Transverse colon (tissue), 4 donors: ENCODE measurements at regions of chr17 and their contacts with region 1.

Region 1: GRCh38 chr17:65455972-65456343 is 105.5 kb downstream of the AXIN2 start:
- DNase-seq: peak; percentile 35
- H3K4me3 ChIP-seq: no peak overlapping the region
- H3K27ac ChIP-seq: no peak overlapping the region
- H3K4me1 ChIP-seq: peaks cover 6 to 22% (median 8%) of the 10 kb centered on the region in 4 donors
- H3K27me3 ChIP-seq: no peaks in the 10 kb centered on the region
- CTCF ChIP-seq: peak in 4 of 5 experiments; percentile 23 to 27 (median 25)
- EP300 ChIP-seq: no peak
- POLR2A ChIP-seq: no peak

Region 2: DNA sequence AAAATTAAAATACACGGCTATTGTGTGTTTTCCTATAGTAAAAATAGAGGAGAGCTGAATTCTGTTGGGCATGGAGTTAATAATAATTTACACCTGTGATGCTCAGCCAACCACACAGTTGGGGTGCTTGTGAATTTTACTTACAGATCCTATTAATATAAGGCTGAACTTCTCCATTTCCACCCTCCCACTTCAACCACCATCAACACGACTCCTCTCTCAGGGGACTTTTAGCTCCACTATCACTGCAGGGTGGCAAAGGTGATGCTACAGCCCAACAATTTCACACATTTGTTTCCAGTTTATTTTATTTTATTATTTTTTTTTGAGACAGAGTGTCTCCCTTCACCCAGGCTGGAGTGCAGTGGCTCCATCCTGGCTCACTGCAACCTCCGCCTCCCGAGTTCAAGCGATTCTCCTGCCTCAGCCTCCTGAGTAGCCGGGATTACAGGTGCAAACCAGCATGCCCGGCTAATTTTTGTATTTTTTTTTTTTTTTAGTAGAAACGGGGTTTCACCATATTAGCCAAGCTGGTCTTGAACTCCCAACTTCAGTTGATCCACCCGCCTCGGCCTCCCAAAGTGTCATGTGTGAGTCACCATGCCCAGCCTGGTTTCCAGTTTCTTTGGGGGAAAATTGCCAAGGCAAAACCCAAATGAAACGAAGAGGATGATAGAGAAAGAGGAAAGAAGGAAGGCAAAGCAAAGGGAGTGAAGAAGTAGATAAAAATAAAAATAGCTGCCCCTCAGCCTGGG is 457.3 kb before region 1 on chr17:
- in situ Hi-C with region 1: no loop called
- intact Hi-C with region 1: no loop called
- DNase-seq: no peak
- H3K4me3 ChIP-seq: no peak overlapping the region
- H3K27ac ChIP-seq: no peak overlapping the region
- H3K4me1 ChIP-seq: no peaks in the 10 kb centered on the region
- H3K27me3 ChIP-seq: no peaks in the 10 kb centered on the region
- CTCF ChIP-seq: no peak
- EP300 ChIP-seq: no peak
- POLR2A ChIP-seq: no peak

Region 3: DNA sequence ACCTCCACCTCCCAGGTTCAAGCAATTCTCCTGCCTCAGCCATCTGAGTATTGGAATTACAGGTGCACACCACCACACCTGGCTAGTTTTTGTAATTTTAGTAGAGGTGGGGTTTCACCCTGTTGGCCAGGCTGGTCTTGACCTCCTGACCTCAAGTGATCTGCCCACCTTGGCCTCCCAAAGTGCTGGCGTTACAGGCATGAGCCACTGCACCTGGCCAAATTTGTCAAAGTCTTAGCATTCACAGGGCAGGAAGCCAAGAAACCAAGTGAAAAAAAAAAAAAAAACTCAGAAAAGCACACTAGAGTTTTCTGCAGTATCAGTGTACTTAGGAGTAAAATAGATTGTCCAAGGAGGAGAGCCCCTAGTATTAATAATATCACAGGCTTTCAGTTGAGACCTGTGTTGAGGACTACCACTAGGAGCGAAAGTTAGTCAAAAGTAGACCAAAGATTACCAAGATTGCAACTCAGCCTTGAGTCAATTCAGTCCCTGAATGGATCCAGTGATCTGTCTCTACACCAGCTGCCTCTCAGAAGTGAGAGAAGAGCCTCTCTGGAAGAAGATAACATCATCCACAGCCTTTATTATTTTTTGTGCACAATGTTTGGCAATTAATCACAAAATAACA is 576.2 kb after region 1 on chr17:
- in situ Hi-C with region 1: no loop called
- intact Hi-C with region 1: loop called (anchors 10 kb)
- DNase-seq: no peak
- H3K4me3 ChIP-seq: no peak overlapping the region
- H3K27ac ChIP-seq: no peak overlapping the region
- H3K4me1 ChIP-seq: no peaks in the 10 kb centered on the region
- H3K27me3 ChIP-seq: no peaks in the 10 kb centered on the region
- CTCF ChIP-seq: no peak
- EP300 ChIP-seq: no peak
- POLR2A ChIP-seq: no peak